Motor neuron (in vitro differentiated cells): ENCODE measurements at regions of chr12 and their contacts with region 1.

Region 1: GRCh38 chr12:11347810-11348209 is 37.6 kb upstream of the PRB4 start:
- ATAC-seq: peak in 2 of 8 experiments; percentile 35 to 36
- H3K4me3 ChIP-seq: no peak overlapping the region
- H3K27ac ChIP-seq: no peak overlapping the region
- H3K4me1 ChIP-seq: no peaks in the 10 kb centered on the region

Region 2: DNA sequence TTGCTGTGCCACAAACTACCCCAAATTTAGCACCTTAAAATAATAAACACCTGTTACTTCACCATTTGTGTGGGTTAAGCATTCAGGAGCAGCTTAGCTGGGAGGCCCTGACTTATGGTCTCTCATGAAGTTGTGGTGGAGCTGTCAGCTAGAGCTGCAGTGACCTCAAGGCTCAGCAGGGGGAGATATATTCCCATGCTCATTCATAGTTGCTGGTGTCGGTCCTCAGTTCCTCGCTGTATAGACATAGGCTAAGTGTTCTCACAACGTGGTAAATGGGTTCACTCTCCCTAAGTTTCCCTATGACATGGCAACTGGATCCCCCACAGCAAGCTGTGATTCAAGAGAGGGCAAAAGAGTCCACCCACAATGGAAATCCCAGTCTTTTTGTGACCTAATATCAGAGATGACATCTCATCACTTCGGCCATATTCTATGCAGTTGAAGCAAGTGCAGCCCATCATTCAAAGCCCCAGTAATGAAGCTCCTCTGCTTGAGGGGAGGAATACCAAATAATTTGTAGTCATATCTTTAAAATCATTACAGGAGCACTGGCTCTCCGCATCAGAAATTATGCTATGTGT is 119.4 kb before region 1 on chr12:
- in situ Hi-C with region 1: loop called in 1 of 9 experiments (anchors 25 kb)
- ATAC-seq: peak in 4 of 8 experiments; percentile 66 to 98 (median 95)
- H3K4me3 ChIP-seq: no peak overlapping the region
- H3K27ac ChIP-seq: no peak overlapping the region
- H3K4me1 ChIP-seq: no peaks in the 10 kb centered on the region

Region 3: DNA sequence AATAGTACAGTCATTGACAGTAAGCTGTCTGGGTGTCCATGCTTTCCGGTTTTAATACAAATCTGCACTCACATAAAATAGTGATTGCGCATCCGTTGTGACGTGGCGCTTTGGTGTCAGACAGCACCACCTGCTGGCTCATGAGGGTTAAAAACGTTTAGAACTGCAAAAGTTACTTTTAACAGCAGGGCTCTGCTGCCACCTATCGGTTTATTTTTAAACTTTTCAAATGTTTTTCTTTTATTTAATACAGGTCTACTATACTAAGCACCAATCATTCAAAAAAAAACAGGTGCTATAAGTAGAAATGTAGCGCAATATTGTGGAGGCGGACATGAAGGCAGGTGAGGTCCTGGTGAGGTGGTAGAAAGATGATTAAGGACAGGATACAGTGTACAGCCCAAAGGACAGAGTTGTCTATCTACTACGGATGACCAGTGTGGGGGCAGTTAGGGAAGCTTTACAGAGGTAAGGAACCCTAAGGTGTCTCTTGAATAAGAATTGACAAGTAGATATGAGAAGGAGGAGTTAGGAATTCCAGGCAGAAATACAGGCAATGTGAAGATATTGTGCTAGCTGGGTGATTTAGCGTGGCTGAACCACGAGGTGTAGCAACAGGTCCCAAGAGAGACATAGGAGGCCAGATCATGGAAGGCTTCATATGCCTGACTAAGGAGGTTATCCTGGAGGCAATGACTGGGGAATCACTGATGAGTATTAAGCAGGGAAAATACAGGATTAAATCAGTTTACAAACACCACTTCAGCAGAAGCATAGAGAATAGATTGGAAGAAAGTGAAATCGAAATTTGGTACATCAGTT is 139.0 kb after region 1 on chr12:
- in situ Hi-C with region 1: no loop called
- ATAC-seq: peak; percentile 78 to 95 (median 88)
- H3K4me3 ChIP-seq: no peak overlapping the region
- H3K27ac ChIP-seq: no peak overlapping the region
- H3K4me1 ChIP-seq: no peaks in the 10 kb centered on the region